ENCODE measurements at regions of chr1 and their contacts with region 1.

Region 1: GRCh38 chr1:168834225-168834872 is 105.3 kb upstream of the DPT start:
- DNase-seq: peak; percentile 17
- H3K4me3 ChIP-seq: no peak overlapping the region
- H3K27ac ChIP-seq: no peak overlapping the region
- H3K4me1 ChIP-seq: peaks cover 8% of the 10 kb centered on the region
- H3K27me3 ChIP-seq: no peaks in the 10 kb centered on the region
- CTCF ChIP-seq: no peak

Region 2: DNA sequence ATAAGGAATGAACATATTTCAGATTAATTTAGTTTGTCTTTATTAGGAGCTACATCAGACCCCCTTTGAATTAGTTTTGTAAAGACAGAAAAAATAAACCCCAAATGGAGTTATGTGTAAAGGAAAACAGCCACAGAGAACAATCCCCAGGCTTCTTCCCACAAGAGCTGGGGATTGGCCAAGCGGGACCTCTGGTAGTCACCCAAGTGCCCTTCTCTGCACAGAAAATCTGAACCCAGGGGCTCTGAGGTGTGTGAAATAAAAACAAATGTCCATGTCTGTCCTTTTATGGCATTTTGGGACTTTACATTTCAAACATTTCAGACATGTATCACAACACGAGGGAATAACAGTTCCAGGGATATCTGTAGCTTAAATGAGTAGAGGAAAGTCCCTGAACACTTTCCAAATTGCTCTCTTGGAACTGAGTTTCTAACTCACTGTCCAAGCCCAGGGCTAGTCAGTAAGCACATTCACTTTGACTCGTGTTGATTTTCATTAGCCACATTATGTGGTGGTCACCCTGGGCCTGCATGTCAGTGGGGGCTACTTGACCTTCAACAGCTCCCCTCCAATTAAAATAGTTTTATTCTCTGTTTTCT is 127.9 kb before region 1 on chr1:
- CTCF ChIA-PET with region 1: no interaction called
- dilution Hi-C with region 1: no loop called
- in situ Hi-C with region 1: no loop called
- intact Hi-C with region 1: no loop called
- DNase-seq: no peak
- H3K4me3 ChIP-seq: no peak overlapping the region
- H3K27ac ChIP-seq: no peak overlapping the region
- H3K4me1 ChIP-seq: peaks cover 26% of the 10 kb centered on the region
- H3K27me3 ChIP-seq: no peaks in the 10 kb centered on the region
- CTCF ChIP-seq: no peak

Region 3: DNA sequence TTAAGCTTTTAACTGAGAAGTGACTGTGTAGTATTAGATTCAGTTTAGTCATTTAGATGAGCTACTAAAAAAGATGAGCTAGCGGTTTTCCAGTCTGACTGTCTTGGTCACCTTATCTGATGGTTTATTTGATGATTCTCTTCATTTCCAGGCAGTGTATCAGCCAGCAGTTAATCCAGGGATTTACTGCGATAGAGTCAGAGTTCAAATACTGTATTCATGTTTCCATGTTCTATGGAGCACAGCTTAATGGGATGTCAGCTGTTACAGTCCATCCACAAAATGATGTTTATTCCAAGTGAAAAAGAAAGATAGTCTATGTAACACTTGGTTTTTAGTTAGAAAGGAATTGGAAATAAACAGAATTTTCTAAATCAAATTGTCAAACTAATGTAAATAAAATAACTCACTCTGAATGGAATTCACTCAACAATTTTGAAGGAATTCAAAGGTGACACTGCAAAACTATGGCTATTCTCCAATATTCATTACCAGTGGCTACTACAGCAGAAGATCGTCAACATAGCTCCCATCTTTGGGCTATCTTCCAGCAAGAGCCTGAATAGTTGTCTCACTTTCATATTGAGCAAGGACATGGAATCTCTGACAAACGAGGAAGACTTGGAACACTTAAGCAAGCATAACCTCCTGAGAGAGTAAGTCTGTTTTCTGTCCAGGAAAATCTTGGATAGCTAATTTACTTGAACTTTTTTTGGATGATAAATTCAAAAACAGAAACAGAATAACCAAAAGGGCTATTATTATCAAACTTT is 50.7 kb before region 1 on chr1:
- CTCF ChIA-PET with region 1: no interaction called
- dilution Hi-C with region 1: no loop called
- in situ Hi-C with region 1: no loop called
- intact Hi-C with region 1: loop called (anchors 1 kb)
- DNase-seq: no peak
- H3K4me3 ChIP-seq: no peak overlapping the region
- H3K27ac ChIP-seq: no peak overlapping the region
- H3K4me1 ChIP-seq: no peaks in the 10 kb centered on the region
- H3K27me3 ChIP-seq: no peaks in the 10 kb centered on the region
- CTCF ChIP-seq: no peak